Activated T-helper 2 cell treated with anti-CD3 and anti-CD28 coated beads, Interferon-gamma antibody, Interleukin-2, Interleukin-4, amounts not matched to agents 10 μg/mL and 5 μg/mL and 100 μg/mL, durations not matched to agents 14 hours and 24 hours and 36 hours (primary cell): ENCODE measurements at regions of chr1 and their contacts with region 1.

Region 1: DNA sequence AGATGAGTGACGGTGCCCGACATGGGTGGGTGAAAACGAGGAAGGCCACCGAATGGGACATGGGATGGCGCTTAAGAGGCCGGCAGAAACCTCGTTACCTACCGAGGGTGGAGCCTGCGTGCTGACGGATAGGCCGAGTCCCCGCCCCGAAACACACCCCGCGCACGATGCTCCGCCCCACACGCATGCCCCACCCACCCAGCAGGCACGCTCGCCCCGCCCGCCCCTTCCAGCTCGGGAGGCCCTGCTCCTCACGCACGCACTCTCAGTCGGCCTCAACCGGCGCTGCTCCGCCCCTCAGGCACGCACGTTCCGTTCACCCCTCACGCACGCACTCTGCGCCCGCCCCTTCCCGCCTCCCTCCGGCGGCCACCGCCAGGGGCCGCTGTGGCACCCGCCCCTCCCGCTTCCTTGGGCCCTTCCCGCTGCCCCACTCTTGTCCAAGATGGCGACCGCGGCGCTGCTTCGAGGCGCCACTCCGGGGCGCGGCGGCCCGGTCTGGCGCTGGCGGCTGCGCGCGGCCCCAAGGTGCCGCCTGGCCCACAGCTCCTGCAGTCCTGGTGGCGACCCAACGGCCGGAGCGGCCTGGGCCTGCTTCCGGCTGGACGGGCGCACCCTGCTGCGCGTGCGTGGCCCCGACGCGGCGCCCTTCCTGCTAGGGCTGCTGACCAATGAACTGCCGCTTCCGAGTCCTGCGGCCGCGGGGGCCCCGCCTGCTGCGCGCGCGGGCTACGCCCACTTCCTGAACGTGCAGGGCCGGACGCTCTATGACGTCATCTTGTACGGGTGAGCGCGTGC is at the start of gene IBA57:
- DNase-seq: peak; percentile 99
- H3K4me3 Mint-ChIP-seq: peak within 1 kb of the TSS; percentile 85
- H3K27ac Mint-ChIP-seq: peak within 1 kb of the TSS; percentile 95
- H3K4me1 Mint-ChIP-seq: peaks cover 23% of the 10 kb centered on the region
- H3K27me3 Mint-ChIP-seq: no peaks in the 10 kb centered on the region
- total RNA-seq, gene IBA57: 7.6 and 7.9 TPM in 2 replicates

Region 2: DNA sequence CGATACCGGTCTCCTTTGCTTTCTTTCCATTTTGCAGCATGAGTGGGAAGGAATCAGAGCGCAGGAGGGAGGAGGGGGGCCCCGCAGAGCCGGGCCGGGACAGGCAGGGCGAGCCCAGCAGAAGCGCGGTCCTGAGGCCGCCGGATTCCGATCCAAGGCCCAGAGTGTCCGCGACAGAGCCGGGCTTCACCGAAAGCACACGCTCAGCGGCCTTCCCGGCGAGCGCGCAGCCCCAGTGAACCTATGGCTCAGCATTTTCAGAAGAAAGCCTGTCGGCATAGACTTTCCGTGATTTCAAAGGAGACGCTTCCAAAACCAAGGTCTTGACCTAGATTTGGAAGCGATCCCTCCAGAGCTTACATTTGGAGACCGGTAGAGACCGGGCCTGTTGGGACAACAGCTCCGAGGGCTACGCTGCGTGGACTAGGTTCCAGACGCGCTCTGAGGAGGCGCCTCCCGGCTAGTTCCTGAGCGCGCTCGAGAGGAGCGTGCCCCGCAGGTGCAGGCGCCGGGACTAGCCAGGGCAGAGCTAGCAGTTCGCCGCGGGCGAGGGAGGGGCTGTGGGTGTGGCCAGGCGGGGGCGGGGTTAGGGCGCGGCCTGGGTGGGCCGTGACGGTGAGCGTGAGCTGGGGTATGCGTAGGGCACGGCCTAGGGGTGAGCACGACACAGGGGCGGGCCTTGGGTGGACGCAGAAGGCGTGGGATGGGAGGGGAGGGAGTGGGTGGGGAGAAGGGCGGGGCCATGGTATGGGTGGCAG is 377.9 kb before region 1 on chr1:
- intact Hi-C with region 1: loop called (anchors 1 kb)
- DNase-seq: peak; percentile 89
- H3K4me3 Mint-ChIP-seq: peak overlapping the region; percentile 71
- H3K27ac Mint-ChIP-seq: no peak overlapping the region
- H3K4me1 Mint-ChIP-seq: peaks cover 5% of the 10 kb centered on the region
- H3K27me3 Mint-ChIP-seq: peaks cover 2% of the 10 kb centered on the region

Region 3: GRCh38 chr1:228059634-228060457 is 105.7 kb before region 1 on chr1:
- intact Hi-C with region 1: no loop called
- DNase-seq: peak; percentile 54
- H3K4me3 Mint-ChIP-seq: peak overlapping the region; percentile 67
- H3K27ac Mint-ChIP-seq: no peak overlapping the region
- H3K4me1 Mint-ChIP-seq: peaks cover 3% of the 10 kb centered on the region
- H3K27me3 Mint-ChIP-seq: peaks cover 41% of the 10 kb centered on the region

Region 4: DNA sequence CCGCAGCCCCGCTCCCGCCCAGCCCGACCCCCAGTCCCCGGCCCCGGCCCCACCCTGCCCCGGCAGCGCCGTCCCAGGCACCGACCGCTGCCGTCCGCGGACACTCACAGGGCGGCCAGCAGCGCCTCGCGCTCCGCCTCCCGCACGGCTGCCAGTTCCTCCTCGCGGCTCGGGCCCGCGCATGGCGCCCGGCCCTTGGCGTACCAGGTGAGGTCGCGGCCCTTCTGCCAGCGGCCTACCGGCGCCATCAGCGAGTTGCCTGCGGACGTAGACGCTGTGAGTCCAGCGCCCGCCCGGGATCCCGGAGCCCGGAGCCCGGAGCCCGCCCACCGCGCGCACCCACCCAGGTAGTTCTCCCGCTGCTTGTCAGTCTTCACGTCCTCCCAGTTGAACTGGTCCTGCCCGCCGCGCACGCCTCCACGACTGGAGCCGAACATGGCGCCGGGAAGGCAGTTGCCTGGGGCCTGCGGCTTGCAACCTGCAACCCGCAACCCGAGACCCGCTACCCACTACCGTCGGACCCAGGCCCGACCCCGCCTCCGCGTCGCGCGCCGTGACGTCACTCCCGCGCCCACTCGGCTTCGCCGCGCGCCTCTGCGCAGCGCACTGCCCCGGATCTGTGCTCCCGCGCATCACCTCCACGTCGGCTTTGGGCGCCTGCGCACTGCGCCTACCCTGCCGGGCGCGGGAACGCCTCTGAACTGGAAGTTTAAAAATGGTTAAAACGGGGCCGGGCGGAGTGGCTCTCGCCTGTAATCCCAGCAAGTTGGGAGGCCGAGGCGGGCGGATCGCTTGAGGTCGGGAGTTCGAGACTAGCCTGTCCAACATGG is 62.6 kb before region 1 on chr1 and contains the start of gene C1orf35:
- intact Hi-C with region 1: loop called (anchors 1 kb)
- DNase-seq: peak; percentile 95
- H3K4me3 Mint-ChIP-seq: peak within 1 kb of the TSS; percentile 91
- H3K27ac Mint-ChIP-seq: peak within 1 kb of the TSS; percentile 90
- H3K4me1 Mint-ChIP-seq: peaks cover 22% of the 10 kb centered on the region
- H3K27me3 Mint-ChIP-seq: no peaks in the 10 kb centered on the region
- total RNA-seq, gene C1orf35: 23.9 and 24.5 TPM in 2 replicates

Region 5: GRCh38 chr1:228139944-228140656 is 25.5 kb before region 1 on chr1 and contains the start of gene GUK1:
- intact Hi-C with region 1: loop called (anchors 1 kb)
- DNase-seq: peak; percentile 100
- H3K4me3 Mint-ChIP-seq: peak within 1 kb of the TSS; percentile 96
- H3K27ac Mint-ChIP-seq: peak within 1 kb of the TSS; percentile 96
- H3K4me1 Mint-ChIP-seq: peaks cover 17% of the 10 kb centered on the region
- H3K27me3 Mint-ChIP-seq: peaks cover 22% of the 10 kb centered on the region
- total RNA-seq, gene GUK1: 219 and 225 TPM in 2 replicates

Region 6: DNA sequence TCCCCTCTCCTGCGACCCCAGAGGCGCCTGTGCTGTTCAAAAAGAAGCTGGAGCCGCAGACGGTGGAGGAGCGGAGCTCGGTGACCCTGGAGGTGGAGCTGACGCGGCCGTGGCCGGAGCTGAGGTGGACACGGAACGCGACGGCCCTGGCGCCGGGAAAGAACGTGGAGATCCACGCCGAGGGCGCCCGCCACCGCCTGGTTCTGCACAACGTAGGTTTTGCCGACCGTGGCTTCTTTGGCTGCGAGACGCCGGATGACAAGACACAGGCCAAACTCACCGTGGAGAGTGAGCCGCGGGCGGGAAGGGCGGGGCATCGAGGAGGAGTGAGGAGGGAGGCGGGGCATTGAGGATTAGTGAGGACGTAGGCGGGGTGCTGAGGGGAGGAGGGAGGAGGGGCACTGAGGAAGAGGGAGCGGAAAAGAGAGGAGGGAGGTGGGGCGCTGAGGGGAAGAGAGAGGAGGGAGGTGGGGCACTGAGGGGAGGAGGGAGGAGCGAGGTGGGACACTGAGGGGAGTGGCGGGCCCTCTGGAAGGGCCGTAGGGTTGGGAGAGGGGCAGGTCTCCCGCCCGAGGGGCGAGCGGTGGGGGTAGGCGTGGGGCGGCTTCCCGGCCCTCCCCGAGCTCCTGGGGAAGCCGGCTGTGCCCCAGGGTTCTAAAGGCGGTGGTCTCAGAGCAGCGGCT is 110.3 kb after region 1 on chr1:
- intact Hi-C with region 1: no loop called
- DNase-seq: peak; percentile 83
- H3K4me3 Mint-ChIP-seq: peak overlapping the region; percentile 67
- H3K27ac Mint-ChIP-seq: no peak overlapping the region
- H3K4me1 Mint-ChIP-seq: peaks cover 4% of the 10 kb centered on the region
- H3K27me3 Mint-ChIP-seq: no peaks in the 10 kb centered on the region

Region 7: DNA sequence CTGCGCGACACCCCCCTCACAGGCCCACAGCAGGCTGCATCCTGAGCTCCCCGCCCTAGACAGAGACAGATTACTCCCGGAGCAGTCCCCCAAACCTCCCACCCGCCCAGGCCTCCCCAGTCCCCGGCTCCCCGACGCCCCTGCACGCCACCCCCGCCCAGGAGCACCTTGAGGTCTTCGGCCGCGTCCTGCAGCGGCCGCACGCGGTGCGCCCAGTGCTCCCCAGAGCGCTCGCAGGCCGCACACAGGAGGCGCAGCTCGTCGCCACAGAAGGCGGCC is 240.4 kb after region 1 on chr1:
- intact Hi-C with region 1: loop called (anchors 1 kb)
- DNase-seq: no peak
- H3K4me3 Mint-ChIP-seq: peak overlapping the region; percentile 97
- H3K27ac Mint-ChIP-seq: peak overlapping the region; percentile 92
- H3K4me1 Mint-ChIP-seq: peaks cover 41% of the 10 kb centered on the region
- H3K27me3 Mint-ChIP-seq: no peaks in the 10 kb centered on the region